Dorsolateral prefrontal cortex (tissue), 120 donors: ENCODE measurements at regions of chr13 and their contacts with region 1.

Region 1: DNA sequence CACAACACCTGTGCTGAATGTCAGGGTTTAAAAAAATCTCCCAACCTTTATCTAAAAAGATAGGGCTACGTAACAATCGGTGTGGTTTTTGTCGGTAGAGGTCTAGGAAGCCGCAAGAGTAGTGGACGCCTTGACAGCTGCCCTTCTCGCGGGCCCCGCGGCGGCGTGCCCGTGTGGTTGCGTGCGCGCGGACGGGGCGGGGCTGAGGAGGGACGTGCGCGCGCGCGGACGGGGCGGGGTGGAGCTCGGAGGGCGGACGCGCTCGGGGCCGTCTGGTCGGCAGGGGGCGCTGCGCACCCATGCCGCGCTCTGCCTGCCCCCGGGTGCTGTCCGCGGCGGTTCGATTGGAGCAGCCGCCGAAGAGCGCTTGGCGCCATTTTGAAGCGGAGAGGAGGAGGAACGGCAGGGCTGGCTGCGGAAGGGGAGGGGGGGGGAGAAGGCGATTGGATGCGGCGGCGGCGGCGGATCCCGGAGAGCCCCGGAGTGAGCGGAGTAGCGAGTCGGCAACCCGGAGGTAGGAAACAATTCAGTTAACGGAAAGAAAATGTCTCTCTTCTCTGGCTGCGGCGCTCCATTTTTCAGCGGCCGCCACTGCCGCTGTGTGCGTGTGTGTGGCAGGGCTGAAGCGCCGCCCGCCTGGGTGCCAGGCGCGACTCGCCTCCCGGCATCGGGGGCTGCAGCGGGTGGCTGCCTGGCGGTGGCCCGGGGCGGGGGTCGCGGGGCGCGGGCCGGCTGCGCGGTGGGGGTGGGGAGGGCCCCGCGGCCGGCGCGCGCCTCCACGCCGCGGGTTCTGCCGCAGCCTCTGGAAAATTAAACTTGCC is at the start of gene PDS5B:
- DNase-seq: peak; percentile 79 to 97 (median 92)
- H3K4me3 ChIP-seq: peak within 1 kb of the TSS; percentile 59 to 98 (median 82)
- H3K27ac ChIP-seq: peak within 1 kb of the TSS; percentile 83 to 99 (median 97)
- H3K27me3 ChIP-seq: no peaks in the 10 kb centered on the region
- CTCF ChIP-seq: peak; percentile 57 to 98 (median 90)
- total RNA-seq, gene PDS5B: 55.6 to 161 (median 108) TPM

Region 2: GRCh38 chr13:32548837-32549236 is 37.5 kb before region 1 on chr13:
- intact Hi-C with region 1: no loop called
- DNase-seq: no peak
- H3K4me3 ChIP-seq: no peak overlapping the region
- H3K27ac ChIP-seq: no peak overlapping the region
- H3K27me3 ChIP-seq: no peaks in the 10 kb centered on the region
- CTCF ChIP-seq: no peak

Region 3: GRCh38 chr13:32639502-32640105 is 53.3 kb after region 1 on chr13:
- intact Hi-C with region 1: loop called (anchors 1 to 2 kb)
- DNase-seq: peak in 8 of 10 donors; percentile 33 to 79 (median 54)
- H3K4me3 ChIP-seq: peak overlapping the region in 1 of 59 donors; percentile 6
- H3K27ac ChIP-seq: peak overlapping the region in 3 of 59 donors; percentile 3 to 45 (median 15)
- H3K27me3 ChIP-seq: no peaks in the 10 kb centered on the region
- CTCF ChIP-seq: peak; percentile 72 to 93 (median 81)

Region 4: DNA sequence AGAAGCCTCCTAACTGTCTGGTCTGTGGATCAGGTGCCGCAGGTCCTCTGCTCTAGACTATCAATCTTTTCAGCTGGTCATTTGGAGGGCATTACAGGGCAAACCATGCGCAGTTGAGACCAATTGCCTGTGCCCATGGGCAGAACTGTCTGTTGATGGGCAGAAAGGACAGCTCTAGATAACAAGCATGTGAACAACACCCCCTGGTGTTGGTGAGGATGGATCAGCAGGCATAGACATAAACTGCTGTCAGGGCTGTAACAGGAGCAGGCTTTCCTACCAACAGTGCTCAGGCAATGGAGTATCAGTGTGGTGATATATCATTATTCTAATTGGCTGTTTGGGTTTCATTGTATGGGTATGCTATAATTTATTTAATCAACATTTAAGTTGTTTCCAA is 325.2 kb after region 1 on chr13:
- intact Hi-C with region 1: loop called in 1 of 2 experiments (anchors 5 kb)
- DNase-seq: peak in 1 of 10 donors; percentile 23
- H3K4me3 ChIP-seq: no peak overlapping the region
- H3K27ac ChIP-seq: no peak overlapping the region
- H3K27me3 ChIP-seq: no peaks in the 10 kb centered on the region
- CTCF ChIP-seq: peak in 37 of 56 donors; percentile 7 to 52 (median 30)

Region 5: DNA sequence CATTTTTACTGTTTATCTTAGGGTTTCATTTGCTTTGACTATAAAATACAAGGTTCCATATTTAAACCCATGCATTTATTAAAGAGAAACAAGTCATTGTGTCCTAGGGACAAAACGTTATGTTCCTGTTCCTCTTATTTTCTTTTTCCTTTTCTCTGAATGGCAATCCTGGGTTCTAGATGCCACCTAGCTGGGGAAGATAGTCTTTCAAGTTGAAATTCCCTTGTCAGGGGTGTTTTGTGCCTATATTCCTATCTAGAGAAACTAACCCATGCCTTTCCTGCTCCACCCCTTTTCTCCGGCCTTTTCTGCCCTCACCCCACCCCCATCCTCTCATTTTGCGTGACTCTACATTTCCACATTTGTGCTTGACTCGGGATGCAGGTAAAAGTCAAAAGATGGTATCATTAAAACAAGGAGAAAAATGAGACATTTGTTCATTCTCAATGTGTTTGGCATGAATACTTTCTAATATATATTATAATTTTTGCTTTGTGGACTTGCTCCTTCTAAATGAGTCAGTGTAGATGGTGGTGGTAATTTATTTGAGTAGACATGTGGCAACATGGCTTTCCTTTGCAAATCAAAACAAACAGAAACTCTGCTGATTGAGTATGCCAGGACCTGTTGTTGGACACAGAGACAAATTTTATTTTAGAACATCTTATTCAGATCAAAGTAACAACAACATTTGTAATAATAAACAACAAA is 726.0 kb after region 1 on chr13:
- intact Hi-C with region 1: loop called in 1 of 2 experiments (anchors 5 kb)
- DNase-seq: no peak
- H3K4me3 ChIP-seq: peak overlapping the region in 8 of 59 donors; percentile 1 to 37 (median 15)
- H3K27ac ChIP-seq: peak overlapping the region in 56 of 59 donors; percentile 0 to 81 (median 51)
- H3K27me3 ChIP-seq: no peaks in the 10 kb centered on the region
- CTCF ChIP-seq: peak; percentile 26 to 81 (median 66)